Esophagus muscularis mucosa (tissue), 4 donors: ENCODE measurements at regions of chr4 and their contacts with region 1.

Region 1: GRCh38 chr4:86927843-86928395 is 6.9 kb upstream of the AFF1 start:
- DNase-seq: no peak
- H3K4me3 ChIP-seq: no peak overlapping the region
- H3K27ac ChIP-seq: peak overlapping the region; percentile 60 to 75 (median 64)
- H3K4me1 ChIP-seq: peaks cover 0 to 16% (median 2%) of the 10 kb centered on the region in 4 donors
- H3K27me3 ChIP-seq: no peaks in the 10 kb centered on the region
- CTCF ChIP-seq: no peak
- EP300 ChIP-seq: no peak
- POLR2A ChIP-seq: no peak

Region 2: GRCh38 chr4:87120411-87121199 is 192.7 kb after region 1 on chr4:
- intact Hi-C with region 1: loop called (anchors 10 kb)
- DNase-seq: no peak
- H3K4me3 ChIP-seq: peak overlapping the region; percentile 38 to 48 (median 46)
- H3K27ac ChIP-seq: peak overlapping the region; percentile 82 to 89 (median 86)
- H3K4me1 ChIP-seq: peaks cover 55 to 88% (median 83%) of the 10 kb centered on the region in 4 donors
- H3K27me3 ChIP-seq: no peaks in the 10 kb centered on the region
- CTCF ChIP-seq: peak in 1 of 3 experiments; percentile 24
- EP300 ChIP-seq: peak; percentile 28
- POLR2A ChIP-seq: no peak

Region 3: DNA sequence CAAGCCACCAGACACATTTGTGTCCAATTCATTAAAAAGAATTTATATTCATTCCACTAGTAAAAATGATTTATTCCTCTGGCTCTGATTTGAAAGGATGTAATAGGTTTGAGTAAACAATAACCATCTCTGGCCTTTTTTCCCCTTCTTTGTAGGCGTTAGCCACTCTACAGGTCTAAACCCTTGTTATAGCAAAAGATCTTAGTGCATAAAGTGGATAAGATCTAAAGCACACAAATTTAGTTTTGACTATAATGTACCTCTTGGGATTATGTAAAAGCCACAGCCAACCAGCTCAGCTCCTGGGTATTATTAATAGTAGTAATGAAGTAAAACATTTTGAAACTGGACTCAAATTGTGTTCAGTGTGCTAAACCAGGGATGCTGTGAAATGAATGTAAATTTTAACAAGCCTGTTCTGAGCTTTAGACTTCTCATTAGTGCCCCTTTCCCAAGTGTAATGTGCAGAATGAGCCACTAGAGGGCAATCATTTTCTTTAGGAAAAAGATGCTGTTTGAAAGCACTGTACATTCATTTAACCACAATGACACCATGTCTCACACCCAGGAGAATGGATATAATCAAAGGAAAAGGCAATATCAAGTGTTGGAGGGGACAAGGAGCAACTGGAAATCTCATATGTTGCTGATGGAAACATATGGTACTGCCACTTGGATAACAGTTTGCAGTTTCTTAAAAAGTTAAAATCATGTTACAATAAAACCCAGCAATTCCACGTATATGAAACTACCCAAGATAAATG is 222.8 kb after region 1 on chr4:
- intact Hi-C with region 1: loop called (anchors 5 kb)
- DNase-seq: no peak
- H3K4me3 ChIP-seq: no peak overlapping the region
- H3K27ac ChIP-seq: no peak overlapping the region
- H3K4me1 ChIP-seq: peaks cover 0 to 10% (median 3%) of the 10 kb centered on the region in 4 donors
- H3K27me3 ChIP-seq: no peaks in the 10 kb centered on the region
- CTCF ChIP-seq: peak in 2 of 3 experiments; percentile 87 to 94
- EP300 ChIP-seq: no peak
- POLR2A ChIP-seq: no peak

Region 4: DNA sequence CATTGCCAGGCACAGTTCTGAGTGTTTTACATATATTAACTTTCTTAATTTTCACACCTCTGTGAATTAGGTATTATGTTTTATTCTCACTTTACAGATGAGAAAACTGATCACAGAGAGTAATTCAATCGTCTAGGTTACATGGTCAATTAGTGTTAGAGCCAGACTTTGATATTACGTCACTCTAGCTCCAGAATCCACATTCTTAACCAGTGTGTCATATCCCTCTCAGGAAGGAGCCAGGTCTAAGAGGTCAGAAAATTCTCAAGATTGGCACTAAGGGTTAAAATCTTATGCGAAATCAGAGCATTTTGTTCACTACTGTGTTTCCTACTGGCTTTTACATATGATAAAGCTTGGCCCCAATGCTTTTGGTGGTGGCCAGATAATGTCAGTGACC is 729.6 kb after region 1 on chr4:
- intact Hi-C with region 1: no loop called
- DNase-seq: no peak
- H3K4me3 ChIP-seq: no peak overlapping the region
- H3K27ac ChIP-seq: no peak overlapping the region
- H3K4me1 ChIP-seq: peaks cover 4 to 16% (median 9%) of the 10 kb centered on the region in 4 donors
- H3K27me3 ChIP-seq: no peaks in the 10 kb centered on the region
- CTCF ChIP-seq: no peak
- EP300 ChIP-seq: no peak
- POLR2A ChIP-seq: no peak